B cell (primary cell): ENCODE measurements at regions of chr15 and their contacts with region 1.

Region 1: DNA sequence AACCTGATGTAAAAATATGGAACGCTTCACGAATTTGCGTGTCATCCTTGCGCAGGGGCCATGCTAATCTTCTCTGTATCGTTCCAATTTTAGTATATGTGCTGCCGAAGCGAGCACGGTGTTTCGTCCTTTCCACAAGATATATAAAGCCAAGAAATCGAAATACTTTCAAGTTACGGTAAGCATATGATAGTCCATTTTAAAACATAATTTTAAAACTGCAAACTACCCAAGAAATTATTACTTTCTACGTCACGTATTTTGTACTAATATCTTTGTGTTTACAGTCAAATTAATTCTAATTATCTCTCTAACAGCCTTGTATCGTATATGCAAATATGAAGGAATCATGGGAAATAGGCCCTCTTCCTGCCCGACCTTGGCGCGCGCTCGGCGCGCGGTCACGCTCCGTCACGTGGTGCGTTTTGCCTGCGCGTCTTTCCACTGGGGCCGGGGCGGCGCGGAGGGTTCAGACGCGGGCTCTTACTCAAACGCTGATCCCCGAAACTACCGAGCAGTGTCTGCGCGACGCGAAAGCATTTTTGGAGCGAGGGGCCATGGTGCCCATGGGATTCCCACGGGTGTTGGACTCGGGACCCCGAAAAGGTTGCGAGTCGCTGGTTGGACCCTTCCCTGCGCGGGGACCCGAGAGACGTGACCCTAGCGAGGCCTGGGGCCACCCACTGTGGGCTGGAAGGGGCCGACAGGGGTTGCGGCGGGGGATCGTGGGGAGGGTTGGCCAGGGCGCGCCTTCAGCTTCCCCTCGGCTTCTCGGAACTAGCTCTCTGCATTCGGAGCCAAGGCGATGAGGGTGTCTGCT is at the start of gene RNU6-1:
- DNase-seq: peak; percentile 97
- ATAC-seq: peak; percentile 84
- H3K4me3 ChIP-seq: peak within 1 kb of the TSS; percentile 68 to 97 (median 83)
- H3K4me3 Mint-ChIP-seq: peak within 1 kb of the TSS; percentile 91
- H3K27ac ChIP-seq: peak within 1 kb of the TSS; percentile 95 to 96
- H3K27ac Mint-ChIP-seq: peak within 1 kb of the TSS; percentile 97
- H3K4me1 ChIP-seq: peaks cover 29 to 36% of the 10 kb centered on the region in 2 donors
- H3K4me1 Mint-ChIP-seq: peaks cover 41% of the 10 kb centered on the region
- H3K27me3 ChIP-seq: peaks cover 0 to 30% (median 12%) of the 10 kb centered on the region in 4 experiments
- H3K27me3 Mint-ChIP-seq: peaks cover 15% of the 10 kb centered on the region
- CTCF ChIP-seq: no peak
- total RNA-seq, gene RNU6-1: not detected in 2 replicates

Region 2: GRCh38 chr15:67240235-67241131 is 599.7 kb before region 1 on chr15:
- CTCF ChIA-PET with region 1: no interaction called
- POLR2A ChIA-PET with region 1: interaction called, 14 read pairs
- intact Hi-C with region 1: no loop called
- DNase-seq: no peak
- ATAC-seq: no peak
- H3K4me3 ChIP-seq: no peak overlapping the region
- H3K4me3 Mint-ChIP-seq: peak overlapping the region; percentile 52
- H3K27ac ChIP-seq: peak overlapping the region in 1 of 2 donors; percentile 29
- H3K27ac Mint-ChIP-seq: peak overlapping the region; percentile 66
- H3K4me1 ChIP-seq: peaks cover 24 to 28% of the 10 kb centered on the region in 2 donors
- H3K4me1 Mint-ChIP-seq: peaks cover 45% of the 10 kb centered on the region
- H3K27me3 ChIP-seq: no peaks in the 10 kb centered on the region
- H3K27me3 Mint-ChIP-seq: no peaks in the 10 kb centered on the region
- CTCF ChIP-seq: no peak

Region 3: GRCh38 chr15:67521029-67521811 is 318.9 kb before region 1 on chr15 and contains the start of gene C15orf61:
- CTCF ChIA-PET with region 1: interaction called, 6 read pairs
- POLR2A ChIA-PET with region 1: no interaction called
- intact Hi-C with region 1: loop called (anchors 1 kb)
- DNase-seq: peak; percentile 91
- ATAC-seq: peak; percentile 83
- H3K4me3 ChIP-seq: peak within 1 kb of the TSS; percentile 71 to 86 (median 83)
- H3K4me3 Mint-ChIP-seq: peak within 1 kb of the TSS; percentile 95
- H3K27ac ChIP-seq: peak within 1 kb of the TSS; percentile 80 to 97
- H3K27ac Mint-ChIP-seq: peak within 1 kb of the TSS; percentile 95
- H3K4me1 ChIP-seq: peaks cover 11 to 18% of the 10 kb centered on the region in 2 donors
- H3K4me1 Mint-ChIP-seq: peaks cover 23% of the 10 kb centered on the region
- H3K27me3 ChIP-seq: no peaks in the 10 kb centered on the region
- H3K27me3 Mint-ChIP-seq: no peaks in the 10 kb centered on the region
- CTCF ChIP-seq: no peak
- total RNA-seq, gene C15orf61: 5.2 and 6.1 TPM in 2 replicates

Region 4: DNA sequence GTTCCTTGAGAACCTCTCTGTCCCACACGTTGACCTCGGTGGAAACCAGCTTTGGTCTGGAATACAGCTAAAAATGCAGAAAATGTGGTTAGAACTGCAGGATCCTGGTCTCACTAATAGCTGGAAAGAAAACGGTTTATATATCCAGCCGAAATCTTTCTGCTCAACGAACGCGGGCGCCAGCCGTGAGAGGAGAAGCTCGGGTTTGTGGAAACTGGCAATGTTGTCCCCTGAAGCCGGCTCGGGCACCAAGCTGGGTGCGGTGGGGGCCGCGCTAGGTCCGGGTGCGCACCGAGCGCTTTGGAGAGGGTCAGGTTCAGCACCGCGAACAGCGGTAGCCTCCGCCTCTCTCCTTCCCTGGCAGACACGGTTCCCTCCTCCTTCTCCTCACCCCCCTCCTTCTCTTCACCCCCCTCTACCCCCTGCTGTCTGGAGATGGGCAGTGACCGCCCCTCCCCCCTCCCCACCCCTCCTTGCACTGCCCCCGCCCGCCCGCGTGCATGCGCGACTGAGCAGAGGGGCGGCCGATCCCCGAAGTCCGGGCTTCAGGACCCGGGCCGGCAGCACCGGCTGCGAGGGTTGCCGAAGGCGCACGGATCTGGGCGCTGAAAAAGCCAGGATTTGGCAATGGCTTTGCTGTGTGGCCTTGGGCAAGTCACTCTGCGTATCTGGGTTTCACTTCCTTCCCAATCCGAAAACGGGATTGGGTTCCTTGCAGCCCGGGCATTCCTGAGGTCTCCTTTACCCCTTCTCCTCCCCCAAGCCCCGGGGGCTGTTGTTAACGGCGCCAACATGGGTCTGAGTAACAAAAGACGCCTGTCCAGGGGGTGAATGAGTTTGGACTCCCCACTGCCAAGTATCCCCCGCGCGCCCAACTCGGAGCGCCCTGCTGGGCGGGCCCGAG is 14.9 kb before region 1 on chr15 and contains the start of gene SKOR1:
- CTCF ChIA-PET with region 1: interaction called, 19 read pairs
- POLR2A ChIA-PET with region 1: interaction called, 7 read pairs
- intact Hi-C with region 1: loop called (anchors 2 kb)
- DNase-seq: peak; percentile 51
- ATAC-seq: no peak
- H3K4me3 ChIP-seq: peak within 1 kb of the TSS in 2 of 5 experiments; percentile 8 to 50
- H3K4me3 Mint-ChIP-seq: peak within 1 kb of the TSS; percentile 90
- H3K27ac ChIP-seq: no peak within 1 kb of the TSS
- H3K27ac Mint-ChIP-seq: peak within 1 kb of the TSS; percentile 89
- H3K4me1 ChIP-seq: peaks cover 76 to 90% of the 10 kb centered on the region in 2 donors
- H3K4me1 Mint-ChIP-seq: peaks cover 63% of the 10 kb centered on the region
- H3K27me3 ChIP-seq: peaks cover 0 to 89% (median 73%) of the 10 kb centered on the region in 4 experiments
- H3K27me3 Mint-ChIP-seq: peaks cover 64% of the 10 kb centered on the region
- CTCF ChIP-seq: no peak
- total RNA-seq, gene SKOR1: 0.32 and 0.67 TPM in 2 replicates

Region 5: DNA sequence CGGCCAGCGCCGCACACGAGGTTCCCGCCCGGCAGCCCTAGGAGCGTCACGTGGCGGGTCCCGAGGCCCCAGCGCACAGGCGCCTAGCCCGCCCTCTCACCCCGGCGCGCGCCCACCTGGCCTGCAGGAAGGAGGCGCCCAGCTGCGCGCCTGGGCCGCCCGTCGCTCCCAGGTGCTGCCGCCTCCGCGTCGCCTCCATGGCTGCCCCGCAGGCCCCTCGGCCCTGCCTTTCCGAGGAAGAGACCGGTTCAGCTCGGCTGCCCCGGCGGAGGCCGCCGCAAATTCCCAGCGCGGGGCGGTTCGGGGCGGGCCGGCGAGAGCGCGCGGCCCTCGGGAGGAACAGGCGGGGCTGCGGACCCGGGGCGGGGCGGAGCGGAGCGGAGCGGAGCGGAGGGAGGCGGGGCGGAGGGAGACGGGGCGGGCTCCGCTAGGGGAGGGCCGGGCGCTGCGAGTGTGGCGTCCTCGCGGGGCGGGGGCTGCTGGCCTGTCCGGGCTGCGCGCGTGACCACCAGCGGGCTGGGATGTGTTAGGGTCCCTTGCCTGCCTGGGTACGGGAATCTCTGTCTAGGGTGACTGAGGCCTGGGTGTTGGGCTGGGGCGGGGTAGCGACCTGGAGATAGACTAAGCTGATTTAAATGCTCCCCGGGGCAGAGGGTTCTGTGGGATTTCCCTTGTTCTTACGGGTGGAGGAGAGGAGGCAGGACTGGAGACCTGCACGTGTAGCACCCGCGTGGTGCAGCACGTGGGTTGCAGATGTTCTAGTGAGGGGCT is 389.4 kb after region 1 on chr15 and contains the start of gene CLN6:
- CTCF ChIA-PET with region 1: no interaction called
- POLR2A ChIA-PET with region 1: no interaction called
- intact Hi-C with region 1: loop called (anchors 1 kb)
- DNase-seq: peak; percentile 93
- ATAC-seq: peak; percentile 87
- H3K4me3 ChIP-seq: peak within 1 kb of the TSS; percentile 57 to 76 (median 73)
- H3K4me3 Mint-ChIP-seq: peak within 1 kb of the TSS; percentile 96
- H3K27ac ChIP-seq: peak within 1 kb of the TSS; percentile 60 to 88
- H3K27ac Mint-ChIP-seq: peak within 1 kb of the TSS; percentile 92
- H3K4me1 ChIP-seq: peaks cover 23 to 42% of the 10 kb centered on the region in 2 donors
- H3K4me1 Mint-ChIP-seq: peaks cover 45% of the 10 kb centered on the region
- H3K27me3 ChIP-seq: peaks cover 0 to 2% (median 0%) of the 10 kb centered on the region in 4 experiments
- H3K27me3 Mint-ChIP-seq: no peaks in the 10 kb centered on the region
- CTCF ChIP-seq: no peak
- total RNA-seq, gene CLN6: 22.8 and 31.5 TPM in 2 replicates

Region 6: GRCh38 chr15:68924866-68925560 is 1084.9 kb after region 1 on chr15:
- CTCF ChIA-PET with region 1: no interaction called
- POLR2A ChIA-PET with region 1: no interaction called
- intact Hi-C with region 1: no loop called
- DNase-seq: peak; percentile 61
- ATAC-seq: peak; percentile 41
- H3K4me3 ChIP-seq: no peak overlapping the region
- H3K4me3 Mint-ChIP-seq: no peak overlapping the region
- H3K27ac ChIP-seq: no peak overlapping the region
- H3K27ac Mint-ChIP-seq: no peak overlapping the region
- H3K4me1 ChIP-seq: no peaks in the 10 kb centered on the region
- H3K4me1 Mint-ChIP-seq: peaks cover 3% of the 10 kb centered on the region
- H3K27me3 ChIP-seq: no peaks in the 10 kb centered on the region
- H3K27me3 Mint-ChIP-seq: peaks cover 9% of the 10 kb centered on the region
- CTCF ChIP-seq: peak; percentile 76